ENCODE measurements at regions of chr2 and their contacts with region 1.

Region 1: GRCh38 chr2:4604767-4605166 is 901.4 kb downstream of the DCDC2C start:
- DNase-seq: no peak
- H3K4me3 ChIP-seq: no peak overlapping the region
- H3K27ac ChIP-seq: no peak overlapping the region
- H3K4me1 ChIP-seq: no peaks in the 10 kb centered on the region
- H3K27me3 ChIP-seq: no peaks in the 10 kb centered on the region
- CTCF ChIP-seq: no peak

Region 2: GRCh38 chr2:4549666-4550210 is 55.0 kb before region 1 on chr2:
- intact Hi-C with region 1: loop called (anchors 2 kb)
- DNase-seq: no peak
- H3K4me3 ChIP-seq: no peak overlapping the region
- H3K27ac ChIP-seq: no peak overlapping the region
- H3K4me1 ChIP-seq: no peaks in the 10 kb centered on the region
- H3K27me3 ChIP-seq: no peaks in the 10 kb centered on the region
- CTCF ChIP-seq: no peak

Region 3: DNA sequence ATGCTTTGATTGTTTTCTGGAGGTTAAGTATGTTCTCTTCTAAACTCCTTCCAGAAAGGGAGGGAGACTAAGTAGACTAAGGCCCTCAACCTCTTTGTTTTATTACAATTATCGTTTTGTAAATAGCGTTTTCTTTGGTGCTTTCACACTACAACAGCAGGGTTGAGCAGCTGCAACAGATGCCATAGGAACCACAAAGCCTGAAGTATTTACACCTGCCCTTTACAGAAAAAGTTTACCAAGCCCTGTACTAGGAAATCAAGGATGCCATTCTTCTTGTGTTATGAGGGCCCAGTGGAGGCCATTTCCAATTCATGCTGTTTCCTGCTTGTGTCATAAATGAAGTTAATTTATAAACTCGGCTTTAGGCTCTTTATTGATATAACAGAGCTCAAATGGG is 13.4 kb after region 1 on chr2:
- intact Hi-C with region 1: no loop called
- DNase-seq: no peak
- H3K4me3 ChIP-seq: no peak overlapping the region
- H3K27ac ChIP-seq: no peak overlapping the region
- H3K4me1 ChIP-seq: no peaks in the 10 kb centered on the region
- H3K27me3 ChIP-seq: no peaks in the 10 kb centered on the region
- CTCF ChIP-seq: no peak

Measured in tibial artery (tissue), 4 donors.